ENCODE measurements at regions of chr2 and their contacts with region 1.

Region 1: GRCh38 chr2:101341901-101342624 is 33.6 kb upstream of the RNF149 start:
- DNase-seq: no peak
- ATAC-seq: peak; percentile 83
- H3K4me3 ChIP-seq: no peak overlapping the region
- H3K27ac ChIP-seq: no peak overlapping the region
- H3K4me1 ChIP-seq: no peaks in the 10 kb centered on the region
- H3K27me3 ChIP-seq: no peaks in the 10 kb centered on the region; a peak in 1 of 4 replicates
- CTCF ChIP-seq: peak; percentile 78 to 88 (median 82)
- EP300 ChIP-seq: no peak
- POLR2A ChIP-seq: no peak
- RAD21 ChIP-seq: peak; percentile 71

Region 2: GRCh38 chr2:101328474-101329007 is 13.5 kb before region 1 on chr2:
- CTCF ChIA-PET with region 1: interaction called, 24 read pairs
- POLR2A ChIA-PET with region 1: no interaction called
- RAD21 ChIA-PET with region 1: no interaction called
- SMC1A ChIA-PET with region 1: interaction called, 7 read pairs
- in situ Hi-C with region 1: no loop called
- intact Hi-C with region 1: no loop called
- DNase-seq: peak; percentile 11
- ATAC-seq: no peak
- H3K4me3 ChIP-seq: no peak overlapping the region
- H3K27ac ChIP-seq: no peak overlapping the region
- H3K4me1 ChIP-seq: no peaks in the 10 kb centered on the region; the same call in 1 of the 2 replicates
- H3K27me3 ChIP-seq: no peaks in the 10 kb centered on the region; a peak in 1 of 4 replicates
- CTCF ChIP-seq: no peak
- EP300 ChIP-seq: no peak
- POLR2A ChIP-seq: no peak
- RAD21 ChIP-seq: no peak

Region 3: GRCh38 chr2:101361121-101361870 is 19.2 kb after region 1 on chr2:
- CTCF ChIA-PET with region 1: interaction called, 18 read pairs
- POLR2A ChIA-PET with region 1: no interaction called
- RAD21 ChIA-PET with region 1: no interaction called
- SMC1A ChIA-PET with region 1: interaction called, 5 read pairs
- in situ Hi-C with region 1: no loop called
- intact Hi-C with region 1: no loop called
- DNase-seq: no peak
- ATAC-seq: peak; percentile 81
- H3K4me3 ChIP-seq: no peak overlapping the region
- H3K27ac ChIP-seq: no peak overlapping the region
- H3K4me1 ChIP-seq: no peaks in the 10 kb centered on the region
- H3K27me3 ChIP-seq: peaks cover 0 to 4% of the 10 kb centered on the region in 2 experiments; a peak in 1 of 4 replicates
- CTCF ChIP-seq: no peak
- EP300 ChIP-seq: no peak
- POLR2A ChIP-seq: no peak
- RAD21 ChIP-seq: no peak

Region 4: GRCh38 chr2:101450965-101451364 is 108.9 kb after region 1 on chr2:
- CTCF ChIA-PET with region 1: no interaction called
- POLR2A ChIA-PET with region 1: no interaction called
- RAD21 ChIA-PET with region 1: no interaction called
- SMC1A ChIA-PET with region 1: no interaction called
- in situ Hi-C with region 1: no loop called
- intact Hi-C with region 1: no loop called
- DNase-seq: no peak
- ATAC-seq: no peak
- H3K4me3 ChIP-seq: no peak overlapping the region
- H3K27ac ChIP-seq: no peak overlapping the region
- H3K4me1 ChIP-seq: no peaks in the 10 kb centered on the region
- H3K27me3 ChIP-seq: no peaks in the 10 kb centered on the region
- CTCF ChIP-seq: no peak
- EP300 ChIP-seq: no peak
- POLR2A ChIP-seq: no peak
- RAD21 ChIP-seq: no peak

Region 5: DNA sequence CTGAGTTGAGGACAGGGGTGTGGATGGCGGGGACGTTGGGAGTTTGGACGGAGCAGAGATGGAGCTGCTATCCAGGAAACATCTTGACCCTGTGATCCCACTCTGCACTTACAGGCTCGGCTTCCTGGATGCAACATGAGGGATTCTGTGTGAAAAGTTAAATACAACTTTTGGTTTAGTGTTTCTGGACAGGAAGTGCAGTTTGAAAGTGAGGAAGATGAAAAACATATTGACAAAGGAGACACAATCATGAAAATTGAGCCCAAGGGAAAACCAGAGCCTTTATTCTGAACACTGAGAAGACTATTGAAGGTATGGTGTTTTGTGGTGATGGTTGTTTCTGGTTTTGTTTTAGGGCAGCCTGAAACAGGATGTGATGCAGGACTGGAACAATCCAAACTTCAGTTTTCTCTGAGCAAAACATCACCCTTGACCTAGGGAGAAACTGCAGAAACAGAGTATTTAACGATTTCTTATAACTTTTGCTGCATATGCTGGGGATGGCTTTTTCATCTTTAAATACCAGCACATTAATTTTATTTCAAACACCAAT is 209.3 kb after region 1 on chr2:
- CTCF ChIA-PET with region 1: no interaction called
- POLR2A ChIA-PET with region 1: no interaction called
- RAD21 ChIA-PET with region 1: no interaction called
- SMC1A ChIA-PET with region 1: no interaction called
- in situ Hi-C with region 1: no loop called
- intact Hi-C with region 1: no loop called
- DNase-seq: no peak
- ATAC-seq: 0 out of 3 replicates have a peak, but pooled peaks have one; percentile 31
- H3K4me3 ChIP-seq: no peak overlapping the region
- H3K27ac ChIP-seq: no peak overlapping the region
- H3K4me1 ChIP-seq: no peaks in the 10 kb centered on the region
- H3K27me3 ChIP-seq: no peaks in the 10 kb centered on the region; a peak in 1 of 4 replicates
- CTCF ChIP-seq: no peak
- EP300 ChIP-seq: no peak
- POLR2A ChIP-seq: no peak
- RAD21 ChIP-seq: no peak

Region 6: GRCh38 chr2:101725515-101726192 is 383.6 kb after region 1 on chr2:
- CTCF ChIA-PET with region 1: interaction called, 10 read pairs
- POLR2A ChIA-PET with region 1: no interaction called
- RAD21 ChIA-PET with region 1: interaction called, 3 read pairs
- SMC1A ChIA-PET with region 1: interaction called, 3 read pairs
- in situ Hi-C with region 1: no loop called
- intact Hi-C with region 1: no loop called
- DNase-seq: no peak
- ATAC-seq: 0 out of 3 replicates have a peak, but pooled peaks have one; percentile 15
- H3K4me3 ChIP-seq: no peak overlapping the region
- H3K27ac ChIP-seq: no peak overlapping the region
- H3K4me1 ChIP-seq: no peaks in the 10 kb centered on the region
- H3K27me3 ChIP-seq: no peaks in the 10 kb centered on the region; a peak in 1 of 4 replicates
- CTCF ChIP-seq: peak; percentile 21 to 46 (median 28); a peak in 5 of 6 replicates
- EP300 ChIP-seq: no peak
- POLR2A ChIP-seq: no peak
- RAD21 ChIP-seq: peak; percentile 58

Region 7: GRCh38 chr2:101873543-101873942 is 531.5 kb after region 1 on chr2:
- CTCF ChIA-PET with region 1: interaction called, 10 read pairs
- POLR2A ChIA-PET with region 1: no interaction called
- RAD21 ChIA-PET with region 1: interaction called, 3 read pairs
- SMC1A ChIA-PET with region 1: no interaction called
- in situ Hi-C with region 1: no loop called
- intact Hi-C with region 1: loop called (anchors 10 kb)
- DNase-seq: no peak
- ATAC-seq: peak; percentile 55; the same call in 2 of the 3 replicates
- H3K4me3 ChIP-seq: no peak overlapping the region
- H3K27ac ChIP-seq: no peak overlapping the region
- H3K4me1 ChIP-seq: no peaks in the 10 kb centered on the region
- H3K27me3 ChIP-seq: no peaks in the 10 kb centered on the region
- CTCF ChIP-seq: peak; percentile 11 to 48 (median 29); a peak in 3 of 6 replicates
- EP300 ChIP-seq: no peak
- POLR2A ChIP-seq: no peak
- RAD21 ChIP-seq: peak; percentile 66